Aorta (tissue), 5 donors: ENCODE measurements at regions of chr12 and their contacts with region 1.

Region 1: DNA sequence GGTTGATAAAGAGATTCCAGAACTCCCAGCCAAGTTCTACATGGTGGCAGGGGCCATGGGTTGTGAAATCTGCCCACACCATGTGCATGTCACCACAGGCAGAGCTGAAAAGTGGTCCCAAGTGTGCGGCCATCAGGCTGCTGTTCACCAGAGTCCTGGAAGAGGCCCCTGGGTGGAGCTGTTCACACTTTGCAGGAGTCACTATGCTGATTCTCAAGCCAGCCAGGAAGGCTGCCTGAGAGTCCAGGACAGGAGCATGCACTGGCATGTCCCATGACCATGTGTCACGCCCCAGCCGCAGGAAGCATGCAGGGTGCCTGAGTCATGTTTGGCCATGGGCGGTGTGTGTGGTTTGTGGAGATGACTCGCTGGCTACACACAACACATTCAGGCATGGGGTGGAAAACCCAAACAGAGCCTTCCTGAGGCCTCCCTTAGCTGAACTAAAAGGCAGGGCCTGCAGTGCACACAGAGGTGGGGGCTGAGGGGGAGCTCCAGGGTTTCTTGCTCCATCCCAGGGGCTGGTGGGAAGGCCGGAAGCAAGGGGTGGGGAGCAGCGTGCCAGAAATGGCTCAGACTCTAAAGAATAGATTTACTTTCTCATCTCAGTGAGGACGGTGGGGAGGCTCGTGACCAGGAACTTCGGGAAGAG is 19.4 kb downstream of the ABCB9 start:
- DNase-seq: peak; percentile 95 to 96
- ATAC-seq: peak; percentile 81
- H3K4me3 ChIP-seq: no peak overlapping the region
- H3K27ac ChIP-seq: no peak overlapping the region
- H3K4me1 ChIP-seq: no peaks in the 10 kb centered on the region
- H3K27me3 ChIP-seq: no peaks in the 10 kb centered on the region

Region 2: DNA sequence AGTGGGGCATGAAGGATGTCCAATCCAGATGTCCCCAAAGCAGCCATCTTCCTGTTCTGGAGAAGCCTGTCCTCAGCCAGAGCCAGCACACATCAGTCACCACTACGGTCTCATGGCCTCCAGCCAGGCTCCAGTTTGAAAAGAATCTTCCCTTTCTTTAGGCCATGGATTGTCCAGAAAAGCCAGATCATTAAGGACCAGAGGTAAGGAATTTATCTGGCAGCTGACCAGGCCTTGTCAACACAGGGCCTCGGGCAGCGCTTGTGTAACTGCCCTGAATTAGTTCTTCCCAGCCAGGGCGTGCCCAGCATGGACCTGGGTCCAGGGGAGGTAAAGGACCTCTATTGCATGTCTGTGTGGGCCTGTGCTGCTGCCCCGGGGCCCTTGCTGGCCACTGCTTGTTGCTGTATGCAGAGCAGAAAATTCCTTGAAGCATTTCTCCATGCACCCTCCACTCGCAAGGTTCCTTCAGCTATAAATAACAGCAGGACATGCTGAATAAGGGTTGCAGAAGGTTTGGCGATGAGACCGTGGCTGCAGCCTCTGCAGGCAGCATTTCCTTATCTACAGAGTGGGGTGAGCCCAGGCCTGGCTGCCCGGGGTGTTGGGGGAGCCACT is 29.2 kb before region 1 on chr12:
- intact Hi-C with region 1: loop called in 1 of 2 experiments (anchors 2 kb)
- DNase-seq: peak in 1 of 2 donors; percentile 63
- ATAC-seq: peak; percentile 67
- H3K4me3 ChIP-seq: no peak overlapping the region
- H3K27ac ChIP-seq: peak overlapping the region in 1 of 2 donors; percentile 83
- H3K4me1 ChIP-seq: no peaks in the 10 kb centered on the region
- H3K27me3 ChIP-seq: no peaks in the 10 kb centered on the region

Region 3: GRCh38 chr12:123043536-123044001 is 96.8 kb after region 1 on chr12:
- intact Hi-C with region 1: no loop called
- DNase-seq: peak; percentile 91 to 96
- ATAC-seq: peak; percentile 91
- H3K4me3 ChIP-seq: no peak overlapping the region
- H3K27ac ChIP-seq: peak overlapping the region in 1 of 2 donors; percentile 43
- H3K4me1 ChIP-seq: no peaks in the 10 kb centered on the region
- H3K27me3 ChIP-seq: no peaks in the 10 kb centered on the region

Region 4: GRCh38 chr12:123056053-123056741 is 109.4 kb after region 1 on chr12:
- intact Hi-C with region 1: no loop called
- DNase-seq: peak in 1 of 2 donors; percentile 65
- ATAC-seq: no peak
- H3K4me3 ChIP-seq: no peak overlapping the region
- H3K27ac ChIP-seq: no peak overlapping the region
- H3K4me1 ChIP-seq: no peaks in the 10 kb centered on the region
- H3K27me3 ChIP-seq: no peaks in the 10 kb centered on the region